ENCODE measurements at regions of chr5 and their contacts with region 1.

Region 1: DNA sequence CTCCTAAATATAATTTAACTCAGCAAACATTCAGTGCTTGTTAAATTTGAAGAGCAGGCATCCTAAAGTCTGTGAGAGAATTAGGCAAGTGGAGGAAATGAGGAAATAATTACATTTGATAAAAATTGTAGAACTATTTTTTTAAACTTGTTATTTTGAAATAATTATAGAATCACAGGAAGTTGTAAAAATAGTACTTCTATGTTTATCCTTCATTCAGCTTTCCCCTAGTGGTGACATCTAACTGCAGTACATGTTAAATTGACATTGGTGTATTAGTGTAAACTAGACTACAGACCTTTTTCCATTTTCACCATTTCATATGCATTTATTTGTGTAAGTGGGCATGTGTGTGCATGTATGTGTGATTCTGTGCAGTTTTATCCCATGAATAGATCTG is 51.6 kb downstream of the F2RL2 start:
- DNase-seq: no peak
- H3K4me3 ChIP-seq: no peak overlapping the region
- H3K27ac ChIP-seq: no peak overlapping the region
- H3K4me1 ChIP-seq: no peaks in the 10 kb centered on the region
- H3K27me3 ChIP-seq: peaks cover 0 to 2% of the 10 kb centered on the region in 2 donors
- CTCF ChIP-seq: no peak

Region 2: DNA sequence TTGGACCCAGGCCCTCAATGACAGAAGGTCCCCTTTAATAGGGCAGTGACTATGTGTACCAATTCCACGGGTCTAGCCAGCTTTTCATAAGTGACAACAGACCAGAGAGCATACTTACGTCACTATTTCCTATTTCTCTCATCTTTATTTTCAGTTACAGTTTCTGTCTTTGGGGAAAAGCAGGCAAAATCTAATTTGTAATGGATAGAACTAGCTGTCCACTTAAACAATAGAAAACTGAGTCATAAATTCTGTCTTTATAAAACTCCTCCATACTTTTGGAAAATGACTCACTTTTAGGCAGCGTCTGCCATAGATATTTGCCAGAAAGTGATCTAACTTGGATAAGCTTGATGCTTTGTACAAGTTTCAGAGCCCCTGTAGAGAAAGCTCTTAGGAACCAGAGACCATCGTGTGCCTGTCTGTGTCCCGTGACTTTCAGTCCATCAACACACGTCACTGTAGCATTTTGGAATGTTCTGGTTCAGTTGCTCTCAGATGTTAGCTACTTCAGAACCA is 50.3 kb before region 1 on chr5:
- intact Hi-C with region 1: loop called (anchors 1 kb)
- DNase-seq: no peak
- H3K4me3 ChIP-seq: no peak overlapping the region
- H3K27ac ChIP-seq: no peak overlapping the region
- H3K4me1 ChIP-seq: no peaks in the 10 kb centered on the region
- H3K27me3 ChIP-seq: no peaks in the 10 kb centered on the region
- CTCF ChIP-seq: no peak

Region 3: GRCh38 chr5:76617675-76618074 is 46.1 kb after region 1 on chr5:
- intact Hi-C with region 1: no loop called
- DNase-seq: no peak
- H3K4me3 ChIP-seq: no peak overlapping the region
- H3K27ac ChIP-seq: no peak overlapping the region
- H3K4me1 ChIP-seq: no peaks in the 10 kb centered on the region
- H3K27me3 ChIP-seq: no peaks in the 10 kb centered on the region
- CTCF ChIP-seq: no peak

Region 4: DNA sequence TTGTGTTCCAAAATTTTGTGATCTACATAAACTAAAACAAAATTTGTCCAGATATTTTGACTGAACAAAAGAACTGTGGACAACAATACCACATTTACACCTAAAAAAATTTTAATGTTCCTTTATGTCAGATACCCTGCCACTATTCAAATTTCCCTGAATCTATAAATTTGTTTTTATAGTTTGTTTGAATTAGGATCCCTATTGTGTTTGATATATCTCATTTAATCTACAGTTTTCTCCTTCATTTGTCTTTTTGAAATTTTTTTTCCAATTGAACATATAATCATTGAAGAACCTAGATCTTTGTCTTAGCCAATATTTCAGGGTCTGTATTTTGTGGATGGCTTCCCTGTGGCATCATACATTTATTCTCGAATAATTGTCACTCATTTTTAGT is 464.4 kb after region 1 on chr5:
- intact Hi-C with region 1: no loop called
- DNase-seq: no peak
- H3K4me3 ChIP-seq: no peak overlapping the region
- H3K27ac ChIP-seq: no peak overlapping the region
- H3K4me1 ChIP-seq: peaks cover 0 to 16% (median 9%) of the 10 kb centered on the region in 4 donors
- H3K27me3 ChIP-seq: no peaks in the 10 kb centered on the region
- CTCF ChIP-seq: no peak